Activated CD4-positive, alpha-beta T cell treated with anti-CD3 and anti-CD28 coated beads for 36 hours (primary cell): ENCODE measurements at regions of chr6 and their contacts with region 1.

Region 1: GRCh38 chr6:169723200-169723909 is 945 bp downstream of the PHF10 start:
- DNase-seq: peak; percentile 80
- ATAC-seq: peak; percentile 33
- H3K4me3 Mint-ChIP-seq: peak overlapping the region; percentile 88
- H3K27ac Mint-ChIP-seq: peak overlapping the region; percentile 99
- H3K4me1 Mint-ChIP-seq: peaks cover 43% of the 10 kb centered on the region
- H3K27me3 Mint-ChIP-seq: no peaks in the 10 kb centered on the region

Region 2: GRCh38 chr6:167826230-167826895 is 1897.0 kb before region 1 on chr6:
- CTCF ChIA-PET with region 1: no interaction called
- POLR2A ChIA-PET with region 1: no interaction called
- intact Hi-C with region 1: loop called in 1 of 2 experiments (anchors 10 kb)
- DNase-seq: peak; percentile 80
- ATAC-seq: peak; percentile 92
- H3K4me3 Mint-ChIP-seq: peak overlapping the region; percentile 76
- H3K27ac Mint-ChIP-seq: peak overlapping the region; percentile 8
- H3K4me1 Mint-ChIP-seq: peaks cover 23% of the 10 kb centered on the region
- H3K27me3 Mint-ChIP-seq: peaks cover 58% of the 10 kb centered on the region

Region 3: GRCh38 chr6:169654598-169655391 is 68.6 kb before region 1 on chr6:
- CTCF ChIA-PET with region 1: interaction called, 3 read pairs
- POLR2A ChIA-PET with region 1: no interaction called
- intact Hi-C with region 1: loop called in 1 of 2 experiments (anchors 1 kb)
- DNase-seq: peak; percentile 83
- ATAC-seq: peak; percentile 95
- H3K4me3 Mint-ChIP-seq: peak overlapping the region; percentile 74
- H3K27ac Mint-ChIP-seq: peak overlapping the region; percentile 75
- H3K4me1 Mint-ChIP-seq: peaks cover 7% of the 10 kb centered on the region
- H3K27me3 Mint-ChIP-seq: no peaks in the 10 kb centered on the region

Region 4: GRCh38 chr6:169709293-169709692 is 14.1 kb before region 1 on chr6:
- CTCF ChIA-PET with region 1: interaction called, 60 read pairs
- POLR2A ChIA-PET with region 1: interaction called, 5 read pairs
- intact Hi-C with region 1: loop called in 1 of 2 experiments (anchors 1 kb)
- DNase-seq: no peak
- ATAC-seq: peak; percentile 30
- H3K4me3 Mint-ChIP-seq: no peak overlapping the region
- H3K27ac Mint-ChIP-seq: no peak overlapping the region
- H3K4me1 Mint-ChIP-seq: peaks cover 44% of the 10 kb centered on the region
- H3K27me3 Mint-ChIP-seq: no peaks in the 10 kb centered on the region

Region 5: GRCh38 chr6:169751242-169752073 is 28.1 kb after region 1 on chr6 and contains the starts of genes DYNLT2 and ERMARD:
- CTCF ChIA-PET with region 1: interaction called, 4 read pairs
- POLR2A ChIA-PET with region 1: interaction called, 4 read pairs
- intact Hi-C with region 1: loop called (anchors 1 kb)
- DNase-seq: peak; percentile 96
- ATAC-seq: peak; percentile 96
- H3K4me3 Mint-ChIP-seq: peak within 1 kb of the TSS; percentile 95
- H3K27ac Mint-ChIP-seq: peak within 1 kb of the TSS; percentile 97
- H3K4me1 Mint-ChIP-seq: peaks cover 23% of the 10 kb centered on the region
- H3K27me3 Mint-ChIP-seq: no peaks in the 10 kb centered on the region
- total RNA-seq, gene DYNLT2: 2.0 to 2.4 TPM
- total RNA-seq, gene ERMARD: 19.2 to 30.2 TPM

Region 6: GRCh38 chr6:170554013-170554795 is 830.8 kb after region 1 on chr6 and contains the start of gene TBP:
- CTCF ChIA-PET with region 1: no interaction called
- POLR2A ChIA-PET with region 1: no interaction called
- intact Hi-C with region 1: loop called in 1 of 2 experiments (anchors 1 kb)
- DNase-seq: peak; percentile 98
- ATAC-seq: peak; percentile 96
- H3K4me3 Mint-ChIP-seq: no peak within 1 kb of the TSS
- H3K27ac Mint-ChIP-seq: no peak within 1 kb of the TSS
- H3K4me1 Mint-ChIP-seq: peaks cover 36% of the 10 kb centered on the region
- H3K27me3 Mint-ChIP-seq: no peaks in the 10 kb centered on the region
- total RNA-seq, gene TBP: 23.9 to 27.4 TPM